HepG2 (cell line): ENCODE measurements at regions of chr17 and their contacts with region 1.

Region 1: GRCh38 chr17:42997984-42998938 is at the start of gene RPL27:
- DNase-seq: peak; percentile 100
- ATAC-seq: peak; percentile 91
- H3K4me3 ChIP-seq: peak within 1 kb of the TSS; percentile 81 to 95 (median 92)
- H3K27ac ChIP-seq: peak within 1 kb of the TSS; percentile 94
- H3K4me1 ChIP-seq: peaks cover 48% of the 10 kb centered on the region
- H3K27me3 ChIP-seq: no peaks in the 10 kb centered on the region; a peak in 1 of 5 replicates
- CTCF ChIP-seq: peak; percentile 90
- EP300 ChIP-seq: peak; percentile 77 to 81; a peak in 3 of 4 replicates
- POLR2A ChIP-seq: peak; percentile 93 to 98
- RAD21 ChIP-seq: peak; percentile 85
- total RNA-seq, gene RPL27: 1,585 and 1,854 TPM in 2 replicates

Region 2: GRCh38 chr17:42832974-42833766 is 165.1 kb before region 1 on chr17 and contains the start of gene PSME3:
- CTCF ChIA-PET with region 1: no interaction called
- POLR2A ChIA-PET with region 1: interaction called, 5 read pairs
- in situ Hi-C with region 1: no loop called
- intact Hi-C with region 1: loop called (anchors 5 kb)
- DNase-seq: peak; percentile 88
- ATAC-seq: peak; percentile 95
- H3K4me3 ChIP-seq: peak within 1 kb of the TSS; percentile 92 to 98 (median 92)
- H3K27ac ChIP-seq: peak within 1 kb of the TSS; percentile 90
- H3K4me1 ChIP-seq: peaks cover 40% of the 10 kb centered on the region
- H3K27me3 ChIP-seq: no peaks in the 10 kb centered on the region; a peak in 1 of 5 replicates
- CTCF ChIP-seq: peak; percentile 37
- EP300 ChIP-seq: peak in 1 of 2 experiments; percentile 26; a peak in 2 of 4 replicates
- POLR2A ChIP-seq: peak; percentile 93 to 97
- RAD21 ChIP-seq: peak; percentile 30; the same call in 1 of the 2 replicates
- total RNA-seq, gene PSME3: 135 and 202 TPM in 2 replicates

Region 3: DNA sequence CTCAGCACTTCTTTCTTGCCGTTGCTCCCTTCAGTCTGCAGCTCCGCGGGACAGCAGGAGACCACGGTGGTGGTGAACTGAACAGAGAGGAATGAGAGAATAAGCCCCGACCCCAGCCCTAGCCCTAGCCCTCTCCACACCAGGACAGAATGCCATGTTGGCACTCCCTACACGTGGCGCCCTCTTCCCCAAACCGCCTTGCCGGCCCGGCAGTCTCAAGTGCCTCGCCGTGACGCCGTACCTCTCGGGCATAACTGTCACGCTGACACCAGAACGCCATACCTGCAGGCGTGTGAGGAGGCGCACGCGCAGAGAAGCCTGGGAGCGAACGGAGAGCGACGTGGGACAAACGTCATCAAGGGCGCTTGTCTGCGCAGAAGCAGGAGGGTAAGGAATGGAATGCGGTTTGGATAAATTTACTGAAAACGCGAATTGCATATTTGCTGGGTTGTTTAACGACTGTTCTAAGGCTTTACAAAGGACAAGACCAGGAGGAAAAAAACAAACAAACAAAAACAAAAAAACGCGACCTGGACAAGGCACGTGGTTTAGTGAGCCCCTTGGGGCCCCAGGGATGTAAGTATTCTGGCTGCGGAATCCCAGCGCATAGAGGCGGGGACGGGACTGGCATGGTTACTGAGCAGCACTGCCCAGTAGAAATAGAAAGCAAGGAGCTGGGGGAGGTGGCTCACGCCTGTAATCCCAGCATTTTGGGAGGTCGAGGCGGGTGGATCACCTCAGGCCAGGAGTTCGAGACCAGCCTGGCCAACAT is 33.9 kb before region 1 on chr17 and contains the start of gene AARSD1:
- CTCF ChIA-PET with region 1: no interaction called
- POLR2A ChIA-PET with region 1: interaction called, 14 read pairs
- in situ Hi-C with region 1: no loop called
- intact Hi-C with region 1: no loop called
- DNase-seq: peak; percentile 70
- ATAC-seq: peak; percentile 83
- H3K4me3 ChIP-seq: peak within 1 kb of the TSS; percentile 60 to 72 (median 63)
- H3K27ac ChIP-seq: peak within 1 kb of the TSS; percentile 44
- H3K4me1 ChIP-seq: peaks cover 19% of the 10 kb centered on the region
- H3K27me3 ChIP-seq: no peaks in the 10 kb centered on the region
- CTCF ChIP-seq: 0 out of 2 replicates have a peak, but pooled peaks have one; percentile 14
- EP300 ChIP-seq: no peak
- POLR2A ChIP-seq: peak; percentile 51 to 74
- RAD21 ChIP-seq: no peak
- total RNA-seq, gene AARSD1: 24.7 and 29.8 TPM in 2 replicates

Region 4: DNA sequence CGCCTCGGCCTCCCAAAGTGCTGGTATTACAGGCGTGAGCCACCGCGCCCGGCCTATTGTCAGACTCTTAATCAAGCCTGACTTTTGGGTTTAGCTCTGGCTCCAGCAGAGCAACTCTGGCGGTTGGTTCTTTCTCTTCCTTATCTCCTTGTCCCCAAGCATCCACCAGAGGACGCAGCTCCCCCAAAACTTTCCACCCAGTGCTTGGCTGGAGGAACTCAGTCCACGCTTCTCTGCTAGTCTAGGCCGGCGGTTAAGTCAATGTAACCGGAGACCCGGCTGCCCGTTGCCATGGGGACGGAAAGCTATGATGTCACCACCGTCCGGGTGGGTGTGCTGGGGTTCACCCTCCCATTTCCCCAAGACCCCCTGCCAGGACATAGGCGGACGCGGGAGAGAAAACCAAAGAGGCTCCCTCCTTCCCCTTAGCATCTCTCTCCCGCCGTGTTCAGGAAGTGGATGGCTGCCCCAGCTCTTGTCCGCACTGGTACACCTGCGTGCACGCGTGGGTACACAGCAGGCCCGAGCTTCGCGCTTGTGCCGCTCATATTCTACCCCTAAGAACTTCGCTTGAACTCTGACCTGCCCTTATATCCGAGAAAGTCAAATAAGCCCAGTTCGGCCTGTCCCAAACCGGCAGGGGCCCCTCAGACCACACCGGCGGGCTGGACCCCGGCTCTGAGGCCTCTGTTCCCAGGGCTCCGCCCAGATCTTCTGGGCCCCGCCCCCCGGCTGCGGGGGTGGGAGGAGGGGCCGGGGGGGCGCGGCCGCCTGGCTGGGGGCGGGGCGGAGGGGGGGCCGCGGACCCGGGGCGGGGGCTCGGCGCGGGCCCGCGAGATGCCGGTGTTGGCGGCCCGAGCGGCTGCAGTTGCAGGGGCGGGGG is 26.4 kb after region 1 on chr17 and contains the start of gene RND2:
- CTCF ChIA-PET with region 1: no interaction called
- POLR2A ChIA-PET with region 1: interaction called, 26 read pairs
- in situ Hi-C with region 1: no loop called
- intact Hi-C with region 1: no loop called
- DNase-seq: peak; percentile 91
- ATAC-seq: peak; percentile 48
- H3K4me3 ChIP-seq: peak within 1 kb of the TSS; percentile 27 to 62 (median 45); a peak in 5 of 6 replicates
- H3K27ac ChIP-seq: no peak within 1 kb of the TSS
- H3K4me1 ChIP-seq: peaks cover 61% of the 10 kb centered on the region
- H3K27me3 ChIP-seq: no peaks in the 10 kb centered on the region; a peak in 1 of 5 replicates
- CTCF ChIP-seq: peak; percentile 96
- EP300 ChIP-seq: peak in 1 of 2 experiments; percentile 54; a peak in 2 of 4 replicates
- POLR2A ChIP-seq: no peak
- RAD21 ChIP-seq: peak; percentile 96
- total RNA-seq, gene RND2: 0.11 TPM in 2 replicates

Region 5: GRCh38 chr17:43170766-43171585 is 172.7 kb after region 1 on chr17 and contains the start of gene NBR1:
- CTCF ChIA-PET with region 1: no interaction called
- POLR2A ChIA-PET with region 1: interaction called, 18 read pairs
- in situ Hi-C with region 1: no loop called
- intact Hi-C with region 1: no loop called
- DNase-seq: peak; percentile 99
- ATAC-seq: peak; percentile 90
- H3K4me3 ChIP-seq: peak within 1 kb of the TSS; percentile 62 to 94 (median 75)
- H3K27ac ChIP-seq: peak within 1 kb of the TSS; percentile 90
- H3K4me1 ChIP-seq: peaks cover 69% of the 10 kb centered on the region
- H3K27me3 ChIP-seq: no peaks in the 10 kb centered on the region; a peak in 1 of 5 replicates
- CTCF ChIP-seq: peak; percentile 79
- EP300 ChIP-seq: peak in 1 of 2 experiments; percentile 43; a peak in 2 of 4 replicates
- POLR2A ChIP-seq: peak; percentile 76 to 89
- RAD21 ChIP-seq: peak; percentile 68
- total RNA-seq, gene NBR1: 51.7 and 79.0 TPM in 2 replicates

Region 6: DNA sequence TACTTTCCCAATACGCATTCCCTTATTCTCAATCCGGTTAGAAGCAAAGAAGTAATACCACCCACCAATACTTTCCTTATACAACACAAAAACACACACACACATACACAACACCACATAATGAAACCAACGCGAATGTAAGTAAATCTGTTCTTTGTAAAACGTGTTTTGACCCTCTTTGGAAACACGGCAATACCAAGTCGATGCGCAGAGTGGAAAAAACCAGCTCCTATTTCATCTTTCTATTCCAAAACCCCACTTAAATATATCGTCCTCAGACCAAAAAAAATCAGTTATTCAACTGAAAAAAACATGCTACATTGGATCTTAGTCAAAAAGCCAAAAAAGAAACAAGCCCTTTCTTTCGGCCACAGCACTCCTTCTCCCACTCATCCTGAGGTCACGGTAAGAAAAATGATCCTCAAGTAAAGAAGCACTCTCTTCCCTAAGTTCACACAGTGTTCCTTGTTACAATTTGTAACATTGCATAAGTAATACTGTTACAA is 369.5 kb after region 1 on chr17:
- CTCF ChIA-PET with region 1: no interaction called
- POLR2A ChIA-PET with region 1: interaction called, 21 read pairs
- in situ Hi-C with region 1: no loop called
- intact Hi-C with region 1: no loop called
- DNase-seq: peak; percentile 91
- ATAC-seq: peak; percentile 37
- H3K4me3 ChIP-seq: peak overlapping the region; percentile 43 to 73 (median 58); a peak in 4 of 6 replicates
- H3K27ac ChIP-seq: peak overlapping the region; percentile 95
- H3K4me1 ChIP-seq: peaks cover 73% of the 10 kb centered on the region
- H3K27me3 ChIP-seq: no peaks in the 10 kb centered on the region; a peak in 1 of 5 replicates
- CTCF ChIP-seq: no peak
- EP300 ChIP-seq: peak in 1 of 2 experiments; percentile 65; a peak in 2 of 4 replicates
- POLR2A ChIP-seq: peak; percentile 98 to 100
- RAD21 ChIP-seq: peak; percentile 59; the same call in 1 of the 2 replicates